PC-3 (cell line): ENCODE measurements at regions of chr5 and their contacts with region 1.

Region 1: DNA sequence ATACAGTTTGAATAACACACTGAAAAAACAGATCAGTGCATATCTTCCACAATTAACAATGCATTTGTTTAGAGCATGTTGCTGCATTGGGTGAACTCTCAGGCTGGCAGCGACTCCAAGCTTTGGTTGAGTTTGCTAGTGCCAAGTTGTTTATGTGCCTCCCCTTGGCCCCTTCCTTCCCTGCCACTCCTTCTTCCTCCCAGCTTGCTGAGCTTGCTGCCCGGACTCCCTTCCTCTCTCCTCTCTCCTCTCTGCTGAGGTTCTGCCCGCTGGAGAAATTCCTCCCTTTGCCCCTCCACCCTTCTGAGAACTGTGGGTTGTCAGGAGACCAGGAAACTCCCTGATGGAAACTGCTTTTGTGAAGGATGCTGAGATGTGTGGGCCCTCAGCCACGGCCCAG is 247.3 kb downstream of the PDZD2 start:
- DNase-seq: no peak
- ATAC-seq: no peak
- H3K4me3 ChIP-seq: no peak overlapping the region
- H3K27ac ChIP-seq: no peak overlapping the region
- H3K4me1 ChIP-seq: no peaks in the 10 kb centered on the region
- H3K27me3 ChIP-seq: no peaks in the 10 kb centered on the region
- CTCF ChIP-seq: no peak

Region 2: GRCh38 chr5:31741496-31741895 is 144.7 kb before region 1 on chr5:
- CTCF ChIA-PET with region 1: no interaction called
- POLR2A ChIA-PET with region 1: no interaction called
- intact Hi-C with region 1: no loop called
- DNase-seq: no peak
- ATAC-seq: no peak
- H3K4me3 ChIP-seq: no peak overlapping the region
- H3K27ac ChIP-seq: no peak overlapping the region
- H3K4me1 ChIP-seq: no peaks in the 10 kb centered on the region
- H3K27me3 ChIP-seq: peaks cover 62% of the 10 kb centered on the region
- CTCF ChIP-seq: no peak

Region 3: GRCh38 chr5:31781772-31782171 is 104.4 kb before region 1 on chr5:
- CTCF ChIA-PET with region 1: no interaction called
- POLR2A ChIA-PET with region 1: no interaction called
- intact Hi-C with region 1: no loop called
- DNase-seq: peak; percentile 11
- ATAC-seq: no peak
- H3K4me3 ChIP-seq: no peak overlapping the region
- H3K27ac ChIP-seq: no peak overlapping the region
- H3K4me1 ChIP-seq: peaks cover 6% of the 10 kb centered on the region; the same call in 1 of the 2 replicates
- H3K27me3 ChIP-seq: 0 out of 2 replicates have a peak, but pooled peaks cover 4% of the 10 kb centered on the region
- CTCF ChIP-seq: no peak

Region 4: GRCh38 chr5:32044939-32045338 is 158.7 kb after region 1 on chr5:
- CTCF ChIA-PET with region 1: no interaction called
- POLR2A ChIA-PET with region 1: no interaction called
- intact Hi-C with region 1: no loop called
- DNase-seq: peak; percentile 93
- ATAC-seq: peak; percentile 98
- H3K4me3 ChIP-seq: 0 out of 2 replicates have a peak overlapping the region, but pooled peaks have one; percentile 4
- H3K27ac ChIP-seq: peak overlapping the region; percentile 23
- H3K4me1 ChIP-seq: peaks cover 17% of the 10 kb centered on the region
- H3K27me3 ChIP-seq: no peaks in the 10 kb centered on the region
- CTCF ChIP-seq: no peak

Region 5: GRCh38 chr5:32092938-32093812 is 207.0 kb after region 1 on chr5:
- CTCF ChIA-PET with region 1: interaction called, 11 read pairs
- POLR2A ChIA-PET with region 1: no interaction called
- intact Hi-C with region 1: no loop called
- DNase-seq: peak; percentile 89
- ATAC-seq: peak; percentile 99
- H3K4me3 ChIP-seq: no peak overlapping the region
- H3K27ac ChIP-seq: no peak overlapping the region
- H3K4me1 ChIP-seq: no peaks in the 10 kb centered on the region
- H3K27me3 ChIP-seq: no peaks in the 10 kb centered on the region
- CTCF ChIP-seq: peak; percentile 92